RWPE1 (cell line): ENCODE measurements at regions of chr4 and their contacts with region 1.

Region 1: DNA sequence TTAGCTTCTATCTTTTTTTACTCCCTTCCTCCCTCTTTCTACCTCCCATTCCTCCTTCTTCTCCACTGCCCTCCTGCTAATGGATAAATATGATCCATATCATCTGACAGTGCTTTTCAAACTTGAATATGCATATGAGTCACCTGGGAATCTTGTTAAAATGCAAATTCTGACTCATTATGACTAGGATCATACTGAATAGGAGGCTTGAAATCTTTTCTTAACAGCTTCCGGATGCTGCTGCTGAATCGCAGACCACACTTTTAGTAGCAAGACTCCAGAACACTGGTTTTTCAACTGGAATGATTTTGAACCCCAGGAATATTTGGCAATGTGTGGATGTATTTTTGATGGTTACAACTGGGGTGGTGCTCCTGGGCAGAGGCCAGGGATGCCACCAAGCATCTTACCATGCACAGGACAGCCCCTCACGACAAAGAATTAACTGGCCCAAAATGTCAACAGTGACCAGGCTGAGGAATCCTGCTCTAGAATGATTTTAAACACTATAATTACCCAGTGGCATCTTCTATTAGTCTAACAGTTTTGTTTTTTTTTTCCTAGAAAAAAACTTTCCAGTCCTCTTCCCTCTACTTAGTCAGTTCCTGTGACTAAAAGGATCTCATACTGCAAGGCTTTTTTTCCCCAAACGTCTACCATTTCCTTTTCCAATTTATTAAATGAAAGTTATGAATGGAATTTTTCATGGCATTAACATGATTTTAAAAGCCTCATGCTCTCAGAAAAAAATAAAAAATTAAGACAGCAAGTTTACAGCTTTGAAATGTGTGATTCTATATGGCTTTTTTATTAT is 10.6 kb upstream of the PYURF start:
- DNase-seq: peak; percentile 81
- H3K27ac ChIP-seq: peak overlapping the region; percentile 61; the same call in 1 of the 2 replicates
- CTCF ChIP-seq: no peak

Region 2: GRCh38 chr4:88659055-88659889 is 125.1 kb after region 1 on chr4:
- CTCF ChIA-PET with region 1: interaction called, 14 read pairs
- POLR2A ChIA-PET with region 1: no interaction called
- DNase-seq: peak; percentile 78
- H3K27ac ChIP-seq: no peak overlapping the region
- CTCF ChIP-seq: peak; percentile 86